Cardiac septum (tissue), 1 donor: ENCODE measurements at regions of chr3 and their contacts with region 1.

Region 1: GRCh38 chr3:81666493-81667121 is 94.8 kb downstream of the GBE1 start:
- DNase-seq: no peak

Region 2: DNA sequence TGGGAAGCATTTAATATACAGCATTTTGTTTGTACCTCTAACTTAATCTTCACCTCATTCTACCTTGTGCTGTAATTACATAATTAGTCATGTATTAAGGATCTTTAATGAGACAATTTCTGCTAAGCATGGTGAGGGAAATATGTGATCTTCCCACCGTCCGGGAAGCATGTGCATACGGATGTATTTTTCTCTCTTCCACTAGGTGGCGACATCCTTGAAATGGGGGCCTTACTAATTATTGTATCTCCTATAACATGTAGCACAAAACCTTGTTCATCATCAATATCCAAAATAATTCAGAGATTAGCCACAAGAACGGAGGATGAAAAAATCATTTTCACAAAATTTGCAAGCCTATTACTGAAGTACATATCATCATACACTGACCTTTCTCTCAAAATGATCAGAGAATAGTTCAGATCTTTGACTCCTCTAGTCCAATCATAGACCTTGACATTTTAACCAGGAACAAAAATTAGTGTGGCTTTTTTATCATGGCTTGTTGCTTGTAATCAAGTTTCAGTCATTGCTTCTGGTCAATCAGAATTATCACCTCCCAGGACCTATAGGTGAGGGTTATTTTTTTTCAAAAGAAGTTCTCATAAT is 243.7 kb after region 1 on chr3:
- intact Hi-C with region 1: loop called (anchors 10 kb)
- DNase-seq: no peak

Region 3: GRCh38 chr3:82133070-82133606 is 466.5 kb after region 1 on chr3:
- intact Hi-C with region 1: loop called (anchors 5 kb)
- DNase-seq: peak; percentile 77